T-cell (primary cell): ENCODE measurements at regions of chr11 and their contacts with region 1.

Region 1: GRCh38 chr11:2992234-2992996 is at the start of gene NAP1L4:
- DNase-seq: peak; percentile 86 to 99 (median 96)
- ATAC-seq: peak; percentile 82 to 86 (median 84)
- H3K4me3 ChIP-seq: peak within 1 kb of the TSS; percentile 70 to 93
- H3K4me3 Mint-ChIP-seq: peak within 1 kb of the TSS; percentile 85 to 99 (median 98)
- H3K27ac ChIP-seq: peak within 1 kb of the TSS; percentile 53
- H3K27ac Mint-ChIP-seq: peak within 1 kb of the TSS; percentile 97 to 98
- H3K4me1 ChIP-seq: peaks cover 17 to 27% of the 10 kb centered on the region in 2 experiments
- H3K4me1 Mint-ChIP-seq: peaks cover 24 to 33% (median 31%) of the 10 kb centered on the region in 3 donors
- H3K27me3 ChIP-seq: no peaks in the 10 kb centered on the region
- H3K27me3 Mint-ChIP-seq: no peaks in the 10 kb centered on the region
- total RNA-seq, gene NAP1L4: 253 to 388 (median 299) TPM

Region 2: DNA sequence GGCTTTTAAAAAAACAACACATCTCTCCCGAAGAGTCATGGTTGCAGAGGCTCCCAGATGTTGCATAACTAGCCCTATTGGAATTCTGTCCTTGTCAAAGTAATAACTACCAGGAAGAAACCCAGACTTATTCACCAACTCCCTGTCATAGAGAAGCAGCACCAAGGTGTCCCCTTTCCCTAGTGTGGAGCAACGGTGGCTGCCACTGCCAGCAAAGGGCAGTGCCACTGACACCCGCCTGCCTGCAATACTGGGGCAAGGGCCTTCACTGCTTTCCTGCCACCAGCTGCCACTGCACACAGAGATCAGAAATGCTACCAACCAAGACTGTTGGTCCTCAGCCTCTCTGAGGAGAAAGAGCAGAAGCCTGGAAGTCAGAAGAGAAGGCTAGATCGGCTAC is 27.6 kb before region 1 on chr11:
- CTCF ChIA-PET with region 1: no interaction called
- POLR2A ChIA-PET with region 1: no interaction called
- DNase-seq: no peak
- ATAC-seq: no peak
- H3K4me3 ChIP-seq: no peak overlapping the region
- H3K4me3 Mint-ChIP-seq: no peak overlapping the region
- H3K27ac ChIP-seq: no peak overlapping the region
- H3K27ac Mint-ChIP-seq: no peak overlapping the region
- H3K4me1 ChIP-seq: no peaks in the 10 kb centered on the region
- H3K4me1 Mint-ChIP-seq: peaks cover 23 to 46% (median 25%) of the 10 kb centered on the region in 3 donors
- H3K27me3 ChIP-seq: no peaks in the 10 kb centered on the region
- H3K27me3 Mint-ChIP-seq: no peaks in the 10 kb centered on the region

Region 3: DNA sequence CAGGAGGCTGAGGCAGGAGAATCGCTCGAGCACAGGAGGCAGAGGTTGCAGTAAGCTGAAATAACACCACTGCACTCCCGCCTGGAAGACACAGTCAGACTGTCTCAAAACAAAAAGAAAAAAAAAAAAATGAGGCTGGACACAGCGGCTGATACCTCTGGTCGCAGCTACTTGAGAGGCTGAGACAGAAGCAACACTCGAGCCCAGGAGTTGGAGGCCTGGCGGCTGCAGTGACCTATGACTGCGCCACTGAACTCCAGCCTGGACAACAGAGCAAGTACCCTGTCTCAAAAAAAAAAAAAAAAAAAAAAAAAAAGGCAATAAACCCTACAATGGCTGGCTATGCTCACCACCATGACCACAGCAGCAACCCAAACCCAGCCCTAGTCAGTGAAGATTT is 11.3 kb before region 1 on chr11:
- CTCF ChIA-PET with region 1: interaction called in 1 of 2 experiments, 12 read pairs
- POLR2A ChIA-PET with region 1: interaction called, 4 to 18 read pairs
- DNase-seq: no peak
- ATAC-seq: no peak
- H3K4me3 ChIP-seq: no peak overlapping the region
- H3K4me3 Mint-ChIP-seq: peak overlapping the region in 1 of 3 donors; percentile 58
- H3K27ac ChIP-seq: no peak overlapping the region
- H3K27ac Mint-ChIP-seq: no peak overlapping the region
- H3K4me1 ChIP-seq: peaks cover 2 to 47% of the 10 kb centered on the region in 2 experiments
- H3K4me1 Mint-ChIP-seq: peaks cover 62 to 83% (median 73%) of the 10 kb centered on the region in 3 donors
- H3K27me3 ChIP-seq: no peaks in the 10 kb centered on the region
- H3K27me3 Mint-ChIP-seq: no peaks in the 10 kb centered on the region

Region 4: GRCh38 chr11:3014057-3014938 is 21.9 kb after region 1 on chr11:
- CTCF ChIA-PET with region 1: interaction called, 3 to 13 read pairs
- POLR2A ChIA-PET with region 1: interaction called, 4 to 16 read pairs
- DNase-seq: peak; percentile 68 to 95 (median 84)
- ATAC-seq: peak; percentile 88 to 92 (median 92)
- H3K4me3 ChIP-seq: peak overlapping the region in 1 of 2 donors; percentile 23
- H3K4me3 Mint-ChIP-seq: peak overlapping the region; percentile 62 to 72 (median 63)
- H3K27ac ChIP-seq: peak overlapping the region; percentile 78
- H3K27ac Mint-ChIP-seq: peak overlapping the region; percentile 94 to 96
- H3K4me1 ChIP-seq: peaks cover 19 to 81% of the 10 kb centered on the region in 2 experiments
- H3K4me1 Mint-ChIP-seq: peaks cover 40 to 83% (median 59%) of the 10 kb centered on the region in 3 donors
- H3K27me3 ChIP-seq: no peaks in the 10 kb centered on the region
- H3K27me3 Mint-ChIP-seq: no peaks in the 10 kb centered on the region